ENCODE measurements at regions of chr1 and their contacts with region 1.

Region 1: GRCh38 chr1:186482661-186483255 is 21.8 kb upstream of the PDC start:
- DNase-seq: peak in 3 of 4 donors; percentile 40 to 74 (median 58)
- ATAC-seq: peak; percentile 93
- H3K4me3 ChIP-seq: no peak overlapping the region
- H3K27ac ChIP-seq: no peak overlapping the region
- H3K4me1 ChIP-seq: no peaks in the 10 kb centered on the region
- H3K27me3 ChIP-seq: no peaks in the 10 kb centered on the region
- CTCF ChIP-seq: peak; percentile 65 to 74

Region 2: GRCh38 chr1:186535388-186536133 is 52.8 kb after region 1 on chr1:
- intact Hi-C with region 1: no loop called
- DNase-seq: no peak
- ATAC-seq: peak; percentile 33
- H3K4me3 ChIP-seq: no peak overlapping the region
- H3K27ac ChIP-seq: no peak overlapping the region
- H3K4me1 ChIP-seq: no peaks in the 10 kb centered on the region
- H3K27me3 ChIP-seq: no peaks in the 10 kb centered on the region
- CTCF ChIP-seq: no peak

Region 3: DNA sequence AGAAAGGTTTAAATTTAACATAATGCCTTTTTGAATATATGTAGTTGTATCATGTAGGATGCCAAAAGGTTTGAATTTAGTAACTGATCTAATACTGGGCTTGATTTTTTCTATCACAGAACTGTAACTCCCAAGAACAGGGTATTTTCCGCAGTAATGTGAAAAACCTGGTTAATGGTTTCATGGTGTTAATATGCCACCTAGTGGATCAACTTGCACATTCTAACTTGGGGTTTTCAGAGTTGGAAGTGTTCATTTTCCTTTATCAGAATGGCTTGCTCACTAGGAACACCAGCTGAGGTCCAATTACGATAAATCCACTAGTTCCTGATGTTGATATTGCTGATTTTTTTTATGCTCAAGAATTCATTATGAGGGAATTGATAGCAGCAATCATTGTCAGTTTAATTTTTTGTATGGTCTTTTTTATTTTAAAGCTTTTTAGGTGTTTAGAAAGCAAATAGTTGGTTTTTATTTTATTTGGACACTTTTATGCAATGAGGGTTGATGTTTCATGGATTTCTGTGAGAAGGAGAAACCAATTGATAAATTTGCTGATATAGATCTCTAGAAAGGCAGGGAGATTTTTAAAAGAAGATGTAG is 503.2 kb after region 1 on chr1:
- intact Hi-C with region 1: loop called in 1 of 2 experiments (anchors 10 kb)
- DNase-seq: peak in 2 of 4 donors; percentile 42 to 64
- ATAC-seq: peak; percentile 85
- H3K4me3 ChIP-seq: no peak overlapping the region
- H3K27ac ChIP-seq: no peak overlapping the region
- H3K4me1 ChIP-seq: no peaks in the 10 kb centered on the region
- H3K27me3 ChIP-seq: no peaks in the 10 kb centered on the region
- CTCF ChIP-seq: peak; percentile 56 to 69